CD8-positive, alpha-beta T cell (primary cell): ENCODE measurements at regions of chr3 and their contacts with region 1.

Region 1: DNA sequence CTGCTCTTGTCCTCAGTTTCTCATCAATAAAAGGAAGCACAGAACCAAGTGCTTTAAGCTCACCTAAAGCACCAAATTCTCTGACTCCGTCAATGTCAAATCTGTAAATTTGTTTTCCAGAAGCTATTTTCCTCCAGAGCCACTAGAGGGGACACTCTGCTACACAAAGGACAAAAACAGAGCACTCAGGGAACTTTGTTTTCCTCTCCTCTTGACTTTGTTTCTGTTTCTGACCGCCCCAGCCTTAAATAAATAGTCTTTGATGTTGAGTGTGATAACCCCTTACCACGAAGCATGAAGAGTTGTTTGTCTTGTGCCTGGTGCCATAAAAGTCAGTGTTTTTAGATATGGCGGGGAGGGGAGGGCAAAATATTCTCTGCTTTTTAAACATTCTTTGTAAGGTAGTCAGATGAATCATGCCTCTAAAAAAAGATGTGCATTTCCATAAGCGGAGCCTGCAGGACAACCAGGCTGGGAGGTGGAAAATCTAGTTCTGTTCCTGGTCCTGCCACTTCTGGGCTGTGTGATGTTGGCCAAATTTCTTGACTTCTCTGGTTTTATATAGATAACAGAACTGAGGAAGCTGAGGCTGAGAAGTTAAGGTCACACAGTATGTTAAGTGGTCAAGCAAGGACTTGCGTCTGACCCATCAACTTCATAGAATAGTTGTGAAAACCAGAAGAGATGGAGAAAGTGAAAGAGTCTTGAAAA is 7.3 kb upstream of the ZBTB38 start:
- DNase-seq: peak in 2 of 9 experiments; percentile 60 to 72
- ATAC-seq: peak; percentile 68
- H3K4me3 ChIP-seq: no peak overlapping the region
- H3K4me3 Mint-ChIP-seq: peak overlapping the region; percentile 48
- H3K27ac ChIP-seq: no peak overlapping the region
- H3K27ac Mint-ChIP-seq: no peak overlapping the region
- H3K4me1 ChIP-seq: peaks cover 4% of the 10 kb centered on the region
- H3K4me1 Mint-ChIP-seq: peaks cover 7% of the 10 kb centered on the region
- H3K27me3 ChIP-seq: no peaks in the 10 kb centered on the region
- H3K27me3 Mint-ChIP-seq: no peaks in the 10 kb centered on the region
- CTCF ChIP-seq: peak; percentile 69

Region 2: GRCh38 chr3:140995881-140996280 is 365.2 kb before region 1 on chr3:
- CTCF ChIA-PET with region 1: no interaction called
- POLR2A ChIA-PET with region 1: no interaction called
- intact Hi-C with region 1: no loop called
- DNase-seq: no peak
- ATAC-seq: no peak
- H3K4me3 ChIP-seq: no peak overlapping the region
- H3K4me3 Mint-ChIP-seq: no peak overlapping the region
- H3K27ac ChIP-seq: no peak overlapping the region
- H3K27ac Mint-ChIP-seq: no peak overlapping the region
- H3K4me1 ChIP-seq: no peaks in the 10 kb centered on the region
- H3K4me1 Mint-ChIP-seq: no peaks in the 10 kb centered on the region
- H3K27me3 ChIP-seq: no peaks in the 10 kb centered on the region
- H3K27me3 Mint-ChIP-seq: no peaks in the 10 kb centered on the region
- CTCF ChIP-seq: no peak

Region 3: GRCh38 chr3:141346418-141346817 is 14.6 kb before region 1 on chr3:
- CTCF ChIA-PET with region 1: interaction called, 25 read pairs
- POLR2A ChIA-PET with region 1: interaction called, 3 read pairs
- intact Hi-C with region 1: no loop called
- DNase-seq: no peak
- ATAC-seq: no peak
- H3K4me3 ChIP-seq: no peak overlapping the region
- H3K4me3 Mint-ChIP-seq: no peak overlapping the region
- H3K27ac ChIP-seq: no peak overlapping the region
- H3K27ac Mint-ChIP-seq: no peak overlapping the region
- H3K4me1 ChIP-seq: no peaks in the 10 kb centered on the region
- H3K4me1 Mint-ChIP-seq: no peaks in the 10 kb centered on the region
- H3K27me3 ChIP-seq: no peaks in the 10 kb centered on the region
- H3K27me3 Mint-ChIP-seq: peaks cover 2% of the 10 kb centered on the region
- CTCF ChIP-seq: no peak

Region 4: GRCh38 chr3:141402476-141403171 is 41.6 kb after region 1 on chr3:
- CTCF ChIA-PET with region 1: interaction called, 5 read pairs
- POLR2A ChIA-PET with region 1: interaction called, 3 read pairs
- intact Hi-C with region 1: loop called in 1 of 2 experiments (anchors 5 kb)
- DNase-seq: peak; percentile 15 to 80 (median 56)
- ATAC-seq: peak; percentile 67
- H3K4me3 ChIP-seq: peak overlapping the region; percentile 70 to 85
- H3K4me3 Mint-ChIP-seq: peak overlapping the region; percentile 96
- H3K27ac ChIP-seq: peak overlapping the region; percentile 81 to 88
- H3K27ac Mint-ChIP-seq: peak overlapping the region; percentile 97
- H3K4me1 ChIP-seq: peaks cover 25% of the 10 kb centered on the region
- H3K4me1 Mint-ChIP-seq: peaks cover 70% of the 10 kb centered on the region
- H3K27me3 ChIP-seq: no peaks in the 10 kb centered on the region
- H3K27me3 Mint-ChIP-seq: no peaks in the 10 kb centered on the region
- CTCF ChIP-seq: no peak

Region 5: DNA sequence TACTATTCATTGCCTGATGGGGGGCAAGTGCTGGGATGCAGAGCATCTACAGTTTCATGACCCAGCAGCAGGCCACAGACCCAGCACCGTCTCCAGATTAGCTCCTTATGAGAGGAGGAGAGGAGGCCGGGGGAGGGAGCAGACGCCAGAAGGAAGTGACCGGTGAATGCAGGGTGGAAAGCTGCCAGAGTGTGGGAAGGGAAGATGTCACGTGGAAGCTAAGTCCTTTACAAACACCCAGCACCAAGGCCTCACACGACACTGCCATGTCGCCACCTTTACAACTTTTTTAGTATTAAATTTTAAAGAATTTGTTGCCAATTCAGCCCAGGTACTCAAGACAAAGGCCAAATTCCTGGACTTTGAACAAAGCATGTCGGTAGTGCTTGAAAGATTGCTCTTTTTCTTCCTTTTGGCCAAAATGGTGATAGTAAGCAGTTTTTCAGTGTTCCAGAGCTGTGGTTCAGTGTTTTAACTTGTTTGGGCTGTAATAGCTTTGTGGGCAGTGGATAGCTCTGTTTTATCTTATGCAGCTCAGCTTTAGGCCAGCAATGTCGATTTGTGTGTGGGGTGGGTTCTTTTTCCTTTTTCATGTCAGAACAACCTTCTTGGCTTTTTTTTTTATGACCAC is 65.5 kb after region 1 on chr3:
- CTCF ChIA-PET with region 1: interaction called, 11 read pairs
- POLR2A ChIA-PET with region 1: no interaction called
- intact Hi-C with region 1: no loop called
- DNase-seq: no peak
- ATAC-seq: no peak
- H3K4me3 ChIP-seq: no peak overlapping the region
- H3K4me3 Mint-ChIP-seq: no peak overlapping the region
- H3K27ac ChIP-seq: no peak overlapping the region
- H3K27ac Mint-ChIP-seq: no peak overlapping the region
- H3K4me1 ChIP-seq: no peaks in the 10 kb centered on the region
- H3K4me1 Mint-ChIP-seq: peaks cover 37% of the 10 kb centered on the region
- H3K27me3 ChIP-seq: no peaks in the 10 kb centered on the region
- H3K27me3 Mint-ChIP-seq: no peaks in the 10 kb centered on the region
- CTCF ChIP-seq: no peak

Region 6: GRCh38 chr3:141452036-141452435 is 91.0 kb after region 1 on chr3:
- CTCF ChIA-PET with region 1: interaction called, 118 read pairs
- POLR2A ChIA-PET with region 1: interaction called, 3 read pairs
- intact Hi-C with region 1: loop called (anchors 1 kb)
- DNase-seq: peak in 5 of 9 experiments; percentile 28 to 77 (median 55)
- ATAC-seq: peak; percentile 88
- H3K4me3 ChIP-seq: no peak overlapping the region
- H3K4me3 Mint-ChIP-seq: no peak overlapping the region
- H3K27ac ChIP-seq: peak overlapping the region in 1 of 2 experiments; percentile 51
- H3K27ac Mint-ChIP-seq: no peak overlapping the region
- H3K4me1 ChIP-seq: peaks cover 15% of the 10 kb centered on the region
- H3K4me1 Mint-ChIP-seq: peaks cover 7% of the 10 kb centered on the region
- H3K27me3 ChIP-seq: no peaks in the 10 kb centered on the region
- H3K27me3 Mint-ChIP-seq: peaks cover 2% of the 10 kb centered on the region
- CTCF ChIP-seq: peak; percentile 55